PC-3 (cell line): ENCODE measurements at regions of chr7 and their contacts with region 1.

Region 1: GRCh38 chr7:83201355-83201754 is 38.7 kb upstream of the PCLO start:
- DNase-seq: no peak
- ATAC-seq: no peak
- H3K4me3 ChIP-seq: no peak overlapping the region
- H3K27ac ChIP-seq: no peak overlapping the region
- H3K4me1 ChIP-seq: 0 out of 2 replicates have a peak, but pooled peaks cover 5% of the 10 kb centered on the region
- H3K27me3 ChIP-seq: no peaks in the 10 kb centered on the region
- CTCF ChIP-seq: no peak

Region 2: GRCh38 chr7:82760074-82760473 is 441.3 kb before region 1 on chr7:
- CTCF ChIA-PET with region 1: no interaction called
- POLR2A ChIA-PET with region 1: interaction called, 12 read pairs
- intact Hi-C with region 1: no loop called
- DNase-seq: peak; percentile 21
- ATAC-seq: peak; percentile 94
- H3K4me3 ChIP-seq: no peak overlapping the region
- H3K27ac ChIP-seq: no peak overlapping the region
- H3K4me1 ChIP-seq: no peaks in the 10 kb centered on the region; the same call in 1 of the 2 replicates
- H3K27me3 ChIP-seq: no peaks in the 10 kb centered on the region
- CTCF ChIP-seq: no peak

Region 3: GRCh38 chr7:83143107-83143506 is 58.2 kb before region 1 on chr7:
- CTCF ChIA-PET with region 1: no interaction called
- POLR2A ChIA-PET with region 1: no interaction called
- intact Hi-C with region 1: no loop called
- DNase-seq: no peak
- ATAC-seq: no peak
- H3K4me3 ChIP-seq: no peak overlapping the region
- H3K27ac ChIP-seq: no peak overlapping the region
- H3K4me1 ChIP-seq: peaks cover 2% of the 10 kb centered on the region; the same call in 1 of the 2 replicates
- H3K27me3 ChIP-seq: no peaks in the 10 kb centered on the region
- CTCF ChIP-seq: no peak

Region 4: DNA sequence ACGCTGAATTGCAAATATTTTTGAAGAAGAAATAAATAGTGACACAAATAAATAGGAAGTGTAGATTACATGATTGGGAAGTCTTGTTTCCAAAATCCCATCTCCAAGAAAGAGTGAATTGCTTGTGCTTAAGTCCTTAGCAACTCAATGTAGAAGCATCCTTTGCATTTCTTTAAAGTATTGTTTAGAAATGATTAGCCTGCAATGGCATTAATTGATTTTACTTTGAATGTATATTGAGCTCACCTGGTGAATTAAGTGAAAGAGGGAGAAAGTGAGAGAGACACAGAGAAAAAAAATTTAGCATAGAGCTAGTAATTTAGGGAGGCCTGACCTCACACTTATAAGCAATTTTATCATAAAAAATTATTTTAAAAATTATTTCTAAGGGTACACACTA is 10.3 kb after region 1 on chr7:
- CTCF ChIA-PET with region 1: no interaction called
- POLR2A ChIA-PET with region 1: no interaction called
- intact Hi-C with region 1: no loop called
- DNase-seq: no peak
- ATAC-seq: no peak
- H3K4me3 ChIP-seq: no peak overlapping the region
- H3K27ac ChIP-seq: no peak overlapping the region
- H3K4me1 ChIP-seq: no peaks in the 10 kb centered on the region
- H3K27me3 ChIP-seq: no peaks in the 10 kb centered on the region
- CTCF ChIP-seq: no peak

Region 5: DNA sequence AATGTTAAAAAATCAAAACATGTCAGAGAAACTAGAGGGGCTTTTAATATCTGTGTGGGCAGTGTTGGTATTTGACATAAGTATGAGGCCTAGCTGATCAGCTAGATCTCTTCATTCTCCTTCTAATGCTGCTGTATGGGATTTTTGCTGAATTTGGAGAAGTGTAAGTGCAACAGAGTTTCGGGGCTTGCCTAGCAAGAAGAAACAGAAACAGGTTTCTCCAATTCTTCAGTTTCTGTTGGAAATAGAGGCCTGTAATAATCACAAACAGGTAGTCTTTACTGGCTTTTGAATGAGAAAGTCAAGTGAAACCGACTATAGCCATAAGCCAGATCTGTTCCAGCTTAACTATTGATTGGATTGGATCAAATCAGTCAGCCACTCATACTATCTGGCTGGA is 57.7 kb after region 1 on chr7:
- CTCF ChIA-PET with region 1: no interaction called
- POLR2A ChIA-PET with region 1: no interaction called
- intact Hi-C with region 1: loop called (anchors 10 kb)
- DNase-seq: no peak
- ATAC-seq: no peak
- H3K4me3 ChIP-seq: no peak overlapping the region
- H3K27ac ChIP-seq: no peak overlapping the region
- H3K4me1 ChIP-seq: no peaks in the 10 kb centered on the region
- H3K27me3 ChIP-seq: peaks cover 10% of the 10 kb centered on the region; the same call in 1 of the 2 replicates
- CTCF ChIP-seq: no peak

Region 6: DNA sequence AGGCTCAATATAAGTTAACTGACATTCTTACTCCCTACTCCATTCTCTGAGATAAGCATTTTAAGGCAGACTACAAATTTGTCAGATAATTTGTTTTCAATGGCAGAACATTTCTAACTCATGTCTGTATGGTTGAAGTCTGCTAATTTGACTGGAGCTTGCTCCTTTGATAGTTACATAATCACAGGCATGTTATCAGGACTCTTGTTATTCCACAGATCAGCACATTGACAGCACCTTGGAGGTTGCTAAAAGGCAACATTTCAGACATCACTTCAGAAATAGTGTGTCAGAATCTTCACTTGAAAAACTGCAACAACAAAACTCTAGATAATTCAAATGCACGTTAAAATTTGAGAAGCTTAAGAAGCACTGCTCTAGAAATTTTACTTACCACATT is 119.7 kb after region 1 on chr7:
- CTCF ChIA-PET with region 1: no interaction called
- POLR2A ChIA-PET with region 1: no interaction called
- intact Hi-C with region 1: no loop called
- DNase-seq: no peak
- ATAC-seq: no peak
- H3K4me3 ChIP-seq: no peak overlapping the region
- H3K27ac ChIP-seq: no peak overlapping the region
- H3K4me1 ChIP-seq: no peaks in the 10 kb centered on the region
- H3K27me3 ChIP-seq: peaks cover 28% of the 10 kb centered on the region
- CTCF ChIP-seq: no peak